Right ventricle myocardium inferior (tissue), 1 donor: ENCODE measurements at regions of chr2 and their contacts with region 1.

Region 1: DNA sequence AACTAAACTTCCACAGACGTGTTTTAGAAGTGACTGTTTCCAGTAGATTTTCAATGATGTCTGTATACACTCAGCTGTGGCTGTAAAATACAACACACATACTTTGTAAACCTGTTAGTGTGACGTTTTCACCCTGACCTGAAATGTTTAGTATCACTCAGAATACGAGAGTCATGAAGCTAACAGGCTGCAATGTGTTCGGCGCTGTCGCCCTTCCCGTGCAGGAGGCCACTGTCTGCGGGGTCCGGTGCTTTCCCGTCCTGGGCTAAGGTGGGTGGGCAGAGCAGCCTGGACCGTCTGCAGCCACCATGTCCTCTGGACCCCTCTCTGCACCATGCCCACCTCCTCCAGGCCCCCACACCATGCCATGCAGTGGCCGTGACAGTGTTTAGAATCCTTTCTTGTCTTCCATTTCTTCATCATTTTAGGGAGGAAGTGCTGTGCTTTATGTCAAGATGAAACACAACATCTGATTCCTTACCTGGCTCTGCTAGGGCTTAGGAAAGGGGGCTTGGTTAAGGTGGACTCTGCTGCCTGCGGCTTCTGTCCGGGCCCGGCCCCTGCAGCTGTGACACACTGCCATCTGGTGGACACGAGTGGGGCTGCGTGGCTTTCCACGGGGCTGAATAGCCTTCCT is 53.8 kb upstream of the RBM44 start:
- DNase-seq: peak; percentile 89
- ATAC-seq: peak; percentile 79

Region 2: GRCh38 chr2:237581751-237582746 is 162.7 kb before region 1 on chr2:
- intact Hi-C with region 1: loop called (anchors 1 kb)
- DNase-seq: peak; percentile 85
- ATAC-seq: peak; percentile 95